HepG2 (cell line): ENCODE measurements at regions of chr2 and their contacts with region 1.

Region 1: DNA sequence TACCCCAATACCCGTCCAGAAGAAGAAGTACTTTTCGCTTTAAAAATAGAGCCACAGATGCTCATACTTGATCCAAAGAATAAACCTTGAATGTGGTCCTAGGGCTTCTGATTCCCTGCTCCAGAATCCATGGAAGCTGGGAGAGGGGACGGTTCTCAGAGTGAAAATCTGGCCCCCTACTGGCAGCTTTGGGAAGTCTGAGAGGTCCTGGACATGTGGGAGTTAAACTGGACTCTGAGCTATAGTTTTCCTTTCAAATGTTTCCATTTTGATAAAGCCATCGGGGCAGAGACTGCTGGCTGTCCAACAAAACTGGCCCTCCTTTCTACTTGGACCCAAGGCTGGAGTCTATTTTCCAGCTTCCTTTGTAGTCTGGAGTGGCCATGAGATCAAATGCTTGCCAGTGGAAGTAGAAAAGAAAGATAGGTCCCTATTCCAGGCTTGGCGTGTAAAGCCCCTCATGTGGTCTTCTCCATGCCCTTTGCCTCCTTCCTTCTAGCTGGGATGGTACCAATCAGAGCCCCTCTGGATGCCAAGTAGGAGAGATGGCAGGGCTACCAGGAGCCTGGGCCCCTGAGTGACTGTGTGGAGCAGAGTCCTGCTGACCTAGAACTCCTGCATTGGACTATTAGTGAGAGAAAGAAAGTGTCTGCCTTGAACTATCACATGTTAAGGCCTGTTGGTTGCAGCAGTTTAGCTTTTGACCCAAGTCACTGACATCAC is 37.7 kb upstream of the TBC1D8 start:
- DNase-seq: peak; percentile 70
- ATAC-seq: peak; percentile 89
- H3K4me3 ChIP-seq: 0 out of 6 replicates have a peak overlapping the region, but pooled peaks of 1 of the 3 experiments have one; percentile 0
- H3K27ac ChIP-seq: no peak overlapping the region
- H3K4me1 ChIP-seq: peaks cover 57% of the 10 kb centered on the region
- H3K27me3 ChIP-seq: no peaks in the 10 kb centered on the region
- CTCF ChIP-seq: peak; percentile 71
- EP300 ChIP-seq: 0 out of 4 replicates have a peak, but pooled peaks of 1 of the 2 experiments have one; percentile 12
- POLR2A ChIP-seq: no peak
- RAD21 ChIP-seq: peak; percentile 59

Region 2: DNA sequence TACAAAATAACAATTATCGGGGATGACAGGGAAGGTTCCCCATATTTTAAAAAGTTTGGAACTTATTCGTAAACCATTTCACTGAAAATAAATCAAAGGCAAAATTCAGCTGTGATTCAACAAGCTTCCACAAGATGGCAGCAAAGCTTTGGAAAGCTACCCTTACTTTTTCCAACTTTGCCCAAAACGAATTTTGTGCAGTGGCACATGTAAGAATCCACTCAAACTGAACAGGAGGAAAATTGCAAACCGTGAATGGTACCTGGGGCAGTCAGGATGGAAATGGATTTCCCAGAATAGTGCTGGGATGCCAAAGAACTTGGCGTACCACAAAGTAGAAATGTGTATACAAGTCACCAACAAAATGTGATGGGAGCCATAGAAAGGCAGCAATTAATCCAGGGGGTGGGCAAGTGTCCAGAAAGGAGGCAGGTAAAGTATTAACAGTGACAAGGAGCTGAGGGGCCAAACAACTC is 176.1 kb before region 1 on chr2:
- CTCF ChIA-PET with region 1: interaction called, 11 read pairs
- POLR2A ChIA-PET with region 1: interaction called, 3 read pairs
- in situ Hi-C with region 1: no loop called
- intact Hi-C with region 1: no loop called
- DNase-seq: peak; percentile 50
- ATAC-seq: no peak
- H3K4me3 ChIP-seq: no peak overlapping the region
- H3K27ac ChIP-seq: no peak overlapping the region
- H3K4me1 ChIP-seq: no peaks in the 10 kb centered on the region
- H3K27me3 ChIP-seq: no peaks in the 10 kb centered on the region
- CTCF ChIP-seq: peak; percentile 85
- EP300 ChIP-seq: no peak
- POLR2A ChIP-seq: no peak; a peak in 1 of 4 replicates
- RAD21 ChIP-seq: peak; percentile 82

Region 3: DNA sequence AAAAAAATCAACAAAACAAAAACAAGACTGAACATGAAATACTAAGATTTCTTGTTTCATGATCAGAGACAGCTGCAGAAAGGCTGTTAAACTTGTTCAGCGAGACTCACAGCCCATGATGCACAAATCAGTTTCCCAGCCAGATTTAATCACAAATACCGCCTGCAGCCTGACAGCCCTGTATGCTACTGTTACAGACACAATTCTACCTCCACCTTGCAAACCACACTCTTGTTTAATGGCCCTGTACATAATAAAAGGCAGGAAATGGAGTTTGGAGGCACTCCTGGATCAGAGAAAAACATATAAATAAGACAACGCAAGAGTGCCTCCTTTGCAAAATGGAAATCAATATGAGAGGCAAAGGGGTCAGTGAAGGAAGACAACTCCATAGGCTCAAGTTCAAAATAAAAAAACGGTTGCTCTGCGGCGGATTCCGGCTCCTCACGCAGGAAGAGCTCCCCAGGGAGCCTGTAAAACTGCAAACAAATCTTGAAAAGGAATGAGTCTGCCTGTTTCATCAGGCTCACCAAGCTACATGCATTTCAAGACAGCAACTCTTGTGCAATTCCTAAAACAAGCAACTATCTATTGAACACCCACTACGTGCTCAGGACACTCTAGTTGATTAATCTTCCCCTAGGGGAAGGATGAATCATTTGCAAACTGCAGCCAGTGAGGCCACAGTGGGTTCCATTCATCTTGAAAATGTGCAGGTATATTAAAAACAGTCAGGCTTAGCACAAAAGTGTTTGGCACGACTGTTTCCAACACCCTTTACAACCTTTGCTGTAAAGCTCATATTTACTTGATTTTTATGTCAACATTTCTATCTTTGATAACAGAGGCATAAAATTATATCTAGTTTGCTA is 75.2 kb before region 1 on chr2:
- CTCF ChIA-PET with region 1: no interaction called
- POLR2A ChIA-PET with region 1: no interaction called
- in situ Hi-C with region 1: no loop called
- intact Hi-C with region 1: no loop called
- DNase-seq: peak; percentile 88
- ATAC-seq: no peak
- H3K4me3 ChIP-seq: peak overlapping the region in 1 of 3 experiments; percentile 13; a peak in 1 of 6 replicates
- H3K27ac ChIP-seq: peak overlapping the region; percentile 100
- H3K4me1 ChIP-seq: peaks cover 96% of the 10 kb centered on the region
- H3K27me3 ChIP-seq: no peaks in the 10 kb centered on the region
- CTCF ChIP-seq: no peak
- EP300 ChIP-seq: peak in 1 of 2 experiments; percentile 88; a peak in 2 of 4 replicates
- POLR2A ChIP-seq: no peak
- RAD21 ChIP-seq: no peak

Region 4: GRCh38 chr2:101175991-101176390 is 12.9 kb before region 1 on chr2:
- CTCF ChIA-PET with region 1: no interaction called
- POLR2A ChIA-PET with region 1: interaction called, 10 read pairs
- in situ Hi-C with region 1: no loop called
- intact Hi-C with region 1: no loop called
- DNase-seq: peak; percentile 86
- ATAC-seq: peak; percentile 94
- H3K4me3 ChIP-seq: no peak overlapping the region; a peak in 1 of 6 replicates
- H3K27ac ChIP-seq: no peak overlapping the region
- H3K4me1 ChIP-seq: peaks cover 36% of the 10 kb centered on the region
- H3K27me3 ChIP-seq: no peaks in the 10 kb centered on the region
- CTCF ChIP-seq: no peak
- EP300 ChIP-seq: 0 out of 4 replicates have a peak, but pooled peaks of 1 of the 2 experiments have one; percentile 16
- POLR2A ChIP-seq: no peak
- RAD21 ChIP-seq: no peak

Region 5: DNA sequence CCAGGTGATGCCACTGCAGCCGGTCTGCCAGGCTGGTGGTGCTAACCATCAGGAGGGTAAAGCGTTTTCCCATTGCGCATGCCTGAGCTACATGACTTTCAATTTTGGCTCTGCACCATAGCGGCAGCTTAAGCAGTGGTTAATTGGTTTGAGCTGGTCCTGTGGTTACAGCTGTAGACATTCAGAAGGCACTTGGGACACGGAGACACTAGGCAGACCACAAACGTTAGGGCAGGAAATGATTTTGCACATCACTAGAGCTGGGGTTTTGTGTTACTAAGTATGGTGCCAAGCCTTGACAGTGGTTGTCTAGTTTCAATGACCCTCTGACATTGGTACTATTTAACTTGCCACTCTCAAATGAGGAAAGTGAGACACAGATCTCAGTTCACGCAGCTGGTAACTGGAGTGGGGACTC is 35.0 kb after region 1 on chr2:
- CTCF ChIA-PET with region 1: no interaction called
- POLR2A ChIA-PET with region 1: no interaction called
- in situ Hi-C with region 1: no loop called
- intact Hi-C with region 1: no loop called
- DNase-seq: no peak
- ATAC-seq: no peak
- H3K4me3 ChIP-seq: no peak overlapping the region
- H3K27ac ChIP-seq: no peak overlapping the region
- H3K4me1 ChIP-seq: peaks cover 9% of the 10 kb centered on the region
- H3K27me3 ChIP-seq: no peaks in the 10 kb centered on the region
- CTCF ChIP-seq: no peak
- EP300 ChIP-seq: no peak
- POLR2A ChIP-seq: no peak
- RAD21 ChIP-seq: no peak